SK-MEL-5 (cell line): ENCODE measurements at regions of chr22 and their contacts with region 1.

Region 1: DNA sequence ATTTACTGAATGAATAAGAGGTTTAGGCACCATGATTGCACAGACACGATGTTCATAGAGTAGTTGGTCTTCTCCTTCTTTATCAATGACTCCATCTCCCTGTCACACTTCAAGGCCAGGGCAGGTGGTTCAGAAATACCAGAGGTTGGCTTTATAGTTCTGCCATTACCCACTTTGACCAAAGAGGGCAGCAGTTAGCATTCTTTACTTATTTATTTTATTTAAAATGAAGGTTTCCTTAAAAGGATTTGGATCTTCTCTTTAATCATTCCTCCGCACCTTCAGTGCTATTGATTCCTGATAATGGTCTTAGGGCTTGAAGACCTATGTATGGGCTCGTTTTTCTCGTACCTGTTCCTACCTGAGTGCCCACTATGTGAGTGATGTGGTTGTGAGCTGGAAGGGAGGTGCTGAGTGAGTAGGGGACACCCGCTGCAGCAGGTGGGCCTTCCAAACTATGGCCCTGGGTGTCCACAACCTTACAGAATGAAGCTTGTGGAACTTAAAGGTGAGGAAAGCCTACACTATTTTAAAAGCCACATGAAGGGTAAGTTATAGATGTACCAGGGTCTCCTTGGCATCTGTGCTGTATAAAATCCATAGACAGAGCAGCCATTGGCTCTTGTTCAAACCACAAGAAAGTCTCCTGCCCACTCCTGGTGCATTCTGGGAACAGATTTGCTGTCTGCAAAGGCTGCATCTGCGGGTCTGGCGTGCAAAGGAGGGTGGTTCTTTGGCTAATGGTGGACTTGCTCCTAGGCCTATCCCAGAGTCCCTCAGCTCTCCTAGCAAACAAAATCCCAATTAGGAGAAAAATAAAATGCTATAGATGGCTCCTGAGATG is 35.0 kb downstream of the TIMP3 start:
- DNase-seq: peak; percentile 47

Region 2: DNA sequence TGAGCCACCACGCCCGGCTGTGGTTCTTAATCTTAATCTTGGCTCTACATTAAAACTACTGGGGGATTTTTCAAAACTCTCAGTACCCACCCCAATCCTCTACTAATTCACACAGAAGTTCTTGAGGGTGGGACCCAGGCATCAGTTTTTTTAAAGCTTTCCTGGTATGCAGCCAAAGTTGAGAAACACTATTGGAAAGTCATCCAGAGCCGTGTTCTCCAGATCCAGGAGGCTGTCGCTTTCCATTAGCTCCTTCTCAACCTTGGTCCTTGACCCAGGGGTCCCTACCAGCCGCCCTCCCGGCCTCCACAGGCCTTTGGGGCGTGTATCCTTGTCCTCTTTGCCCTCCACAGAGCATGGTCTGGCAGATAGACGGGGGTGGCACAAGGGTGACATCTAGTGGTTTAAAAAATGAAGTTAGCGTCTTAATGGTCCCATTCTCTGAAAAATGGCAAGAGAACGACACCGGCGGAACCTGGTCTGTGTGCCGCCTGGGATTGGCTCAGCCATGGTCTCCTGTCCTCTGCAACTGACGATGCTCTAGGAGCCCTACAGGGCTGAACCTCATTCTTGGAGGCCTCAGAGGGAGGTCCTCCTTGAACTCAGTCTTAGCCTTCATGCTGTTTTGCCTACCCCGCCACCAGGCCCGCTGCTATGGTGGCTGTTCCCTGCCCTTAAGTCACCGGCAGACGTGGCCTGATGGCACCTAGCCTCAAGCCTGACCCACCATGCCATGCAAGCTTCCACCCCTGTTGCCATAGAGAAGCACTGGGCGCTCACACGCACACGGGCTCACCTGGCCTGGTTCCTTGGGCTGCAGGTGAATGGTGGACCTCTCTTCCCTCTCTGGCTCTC is 373.7 kb after region 1 on chr22:
- in situ Hi-C with region 1: loop called (anchors 25 kb)
- DNase-seq: peak; percentile 81